ENCODE measurements at regions of chr2 and their contacts with region 1.

Region 1: GRCh38 chr2:197434541-197435513 is at the start of gene SF3B1:
- DNase-seq: peak; percentile 96 to 99 (median 99)
- ATAC-seq: peak; percentile 92 to 94
- H3K4me3 Mint-ChIP-seq: peak within 1 kb of the TSS; percentile 92 to 100 (median 99)
- H3K27ac Mint-ChIP-seq: peak within 1 kb of the TSS; percentile 100
- H3K4me1 Mint-ChIP-seq: peaks cover 32 to 57% (median 54%) of the 10 kb centered on the region in 4 donors
- H3K27me3 Mint-ChIP-seq: no peaks in the 10 kb centered on the region
- polyA plus RNA-seq, gene SF3B1: 120 to 131 (median 120) TPM

Region 2: GRCh38 chr2:196939187-196939770 is 495.5 kb before region 1 on chr2:
- POLR2A ChIA-PET with region 1: no interaction called
- DNase-seq: no peak
- ATAC-seq: no peak
- H3K4me3 Mint-ChIP-seq: no peak overlapping the region
- H3K27ac Mint-ChIP-seq: no peak overlapping the region
- H3K4me1 Mint-ChIP-seq: peaks cover 0 to 4% (median under 1%) of the 10 kb centered on the region in 4 donors
- H3K27me3 Mint-ChIP-seq: peaks cover 1 to 10% (median 8%) of the 10 kb centered on the region in 5 donors

Region 3: DNA sequence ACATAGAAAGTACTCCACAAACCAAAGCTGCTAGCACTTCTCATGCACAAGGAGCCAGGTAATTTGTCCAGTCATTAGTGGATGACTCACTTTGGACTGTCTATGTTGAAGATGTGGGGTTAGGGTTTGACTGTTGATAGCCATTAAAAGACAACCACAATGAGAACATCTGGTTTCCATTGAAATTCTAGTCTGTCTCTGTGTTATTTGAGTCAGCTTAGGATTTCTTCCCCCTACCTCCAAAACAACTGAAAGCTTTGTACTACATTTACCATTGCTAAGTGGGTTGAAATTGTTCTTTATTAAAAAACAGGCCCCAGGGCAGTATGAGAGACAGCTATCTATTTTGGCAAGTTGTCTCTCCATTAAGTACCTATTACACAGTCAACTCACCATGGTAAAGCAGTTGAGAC is 74.1 kb before region 1 on chr2:
- POLR2A ChIA-PET with region 1: no interaction called
- DNase-seq: no peak
- ATAC-seq: no peak
- H3K4me3 Mint-ChIP-seq: no peak overlapping the region
- H3K27ac Mint-ChIP-seq: no peak overlapping the region
- H3K4me1 Mint-ChIP-seq: peaks cover 14 to 28% (median 21%) of the 10 kb centered on the region in 4 donors
- H3K27me3 Mint-ChIP-seq: no peaks in the 10 kb centered on the region

Region 4: GRCh38 chr2:197515739-197516392 is 81.0 kb after region 1 on chr2 and contains the start of gene MOB4:
- POLR2A ChIA-PET with region 1: interaction called, 31 read pairs
- DNase-seq: peak; percentile 87 to 95 (median 92)
- ATAC-seq: peak; percentile 84 to 87
- H3K4me3 Mint-ChIP-seq: peak within 1 kb of the TSS; percentile 80 to 99 (median 94)
- H3K27ac Mint-ChIP-seq: peak within 1 kb of the TSS; percentile 88 to 99 (median 95)
- H3K4me1 Mint-ChIP-seq: peaks cover 17 to 61% (median 35%) of the 10 kb centered on the region in 4 donors
- H3K27me3 Mint-ChIP-seq: no peaks in the 10 kb centered on the region
- polyA plus RNA-seq, gene MOB4: 19.4 to 29.1 (median 23.6) TPM

Region 5: DNA sequence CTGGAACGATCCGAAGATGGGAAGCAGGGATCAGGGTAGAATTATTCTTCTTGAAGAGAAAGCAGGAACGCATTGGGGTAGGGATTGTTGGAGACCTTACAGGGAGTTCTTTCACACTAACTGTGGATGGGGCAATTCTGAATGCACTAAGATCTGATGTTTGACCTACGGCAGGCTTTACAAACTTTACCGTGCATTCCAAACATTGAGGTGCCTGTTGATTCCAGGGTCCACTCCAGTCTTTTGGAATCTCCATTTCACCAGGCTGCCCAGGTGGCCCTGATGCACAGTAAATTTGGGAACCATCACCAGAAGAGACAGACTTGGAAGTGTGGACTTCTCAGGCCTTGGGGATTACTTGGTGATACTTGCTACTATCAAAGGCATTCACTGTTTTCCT is 163.6 kb after region 1 on chr2:
- POLR2A ChIA-PET with region 1: no interaction called
- DNase-seq: no peak
- ATAC-seq: no peak
- H3K4me3 Mint-ChIP-seq: no peak overlapping the region
- H3K27ac Mint-ChIP-seq: no peak overlapping the region
- H3K4me1 Mint-ChIP-seq: peaks cover 5 to 9% (median 8%) of the 10 kb centered on the region in 4 donors
- H3K27me3 Mint-ChIP-seq: peaks cover 0 to 19% (median 5%) of the 10 kb centered on the region in 5 donors

Region 6: GRCh38 chr2:197615016-197615652 is 180.3 kb after region 1 on chr2:
- POLR2A ChIA-PET with region 1: no interaction called
- DNase-seq: no peak
- ATAC-seq: peak; percentile 44 to 48
- H3K4me3 Mint-ChIP-seq: no peak overlapping the region
- H3K27ac Mint-ChIP-seq: peak overlapping the region in 4 of 10 donors; percentile 7 to 82 (median 67)
- H3K4me1 Mint-ChIP-seq: peaks cover 9 to 12% (median 10%) of the 10 kb centered on the region in 4 donors
- H3K27me3 Mint-ChIP-seq: peaks cover 0 to 4% (median 0%) of the 10 kb centered on the region in 5 donors

Measured in naive thymus-derived CD8-positive, alpha-beta T cell (primary cell).